Right ventricle myocardium superior (tissue), 1 donor: ENCODE measurements at regions of chr9 and their contacts with region 1.

Region 1: GRCh38 chr9:20319641-20320337 is 302.5 kb downstream of the MLLT3 start:
- DNase-seq: no peak
- ATAC-seq: no peak

Region 2: DNA sequence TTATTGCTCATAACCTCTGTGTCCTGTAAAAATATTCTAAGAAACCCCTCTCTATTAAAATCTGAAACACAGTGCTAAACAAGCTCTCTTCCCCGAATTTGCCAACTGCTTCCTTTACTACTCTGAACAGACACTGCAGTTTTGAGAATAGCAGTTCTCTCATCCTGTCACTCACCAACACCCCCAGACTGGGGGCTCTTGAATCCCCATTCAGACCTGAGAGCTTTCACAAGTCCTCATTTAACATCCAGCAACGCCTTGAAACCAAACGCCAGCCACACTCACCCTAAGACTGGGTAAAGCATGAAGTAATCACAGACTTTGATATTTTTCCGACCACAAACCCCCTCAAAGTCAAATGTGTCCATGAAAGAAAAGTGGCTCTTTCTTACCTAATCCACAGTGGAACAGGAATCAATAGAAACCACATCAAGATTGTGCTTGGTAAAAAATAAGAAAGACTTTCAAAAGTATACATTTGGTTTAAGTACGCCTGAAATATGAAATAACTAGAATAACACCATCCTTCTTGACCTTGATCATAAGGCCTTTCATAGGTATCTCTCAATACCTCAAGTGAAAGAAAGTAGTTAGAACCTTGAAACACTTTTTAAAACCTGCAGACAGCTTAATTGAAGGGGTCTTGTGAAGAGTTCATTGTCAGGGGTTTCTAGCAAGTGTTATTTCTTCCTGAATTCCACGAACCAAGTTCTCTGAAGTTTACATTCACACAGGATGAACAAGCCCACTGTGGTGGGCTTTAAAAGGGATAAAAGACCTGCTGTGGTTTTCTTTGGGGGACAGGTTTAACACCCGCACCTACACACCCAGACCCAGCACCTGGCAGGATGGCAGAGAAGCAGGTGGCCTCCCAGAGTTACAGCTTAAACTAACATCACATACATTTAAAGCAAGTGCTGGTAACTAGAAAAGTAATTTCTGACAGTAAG is 110.1 kb before region 1 on chr9:
- intact Hi-C with region 1: loop called (anchors 10 kb)
- DNase-seq: no peak
- ATAC-seq: no peak

Region 3: GRCh38 chr9:20256284-20256948 is 63.4 kb before region 1 on chr9:
- intact Hi-C with region 1: loop called (anchors 10 kb)
- DNase-seq: no peak
- ATAC-seq: no peak